ENCODE measurements at regions of chr3 and their contacts with region 1.

Region 1: GRCh38 chr3:112372396-112372795 is 39.4 kb downstream of the CD200 start:
- DNase-seq: no peak
- ATAC-seq: no peak
- H3K4me3 ChIP-seq: no peak overlapping the region
- H3K4me3 Mint-ChIP-seq: no peak overlapping the region
- H3K27ac ChIP-seq: no peak overlapping the region
- H3K27ac Mint-ChIP-seq: no peak overlapping the region
- H3K4me1 ChIP-seq: peaks cover 0 to 5% of the 10 kb centered on the region in 2 donors
- H3K4me1 Mint-ChIP-seq: peaks cover 10 to 40% (median 19%) of the 10 kb centered on the region in 7 donors
- H3K27me3 ChIP-seq: no peaks in the 10 kb centered on the region
- H3K27me3 Mint-ChIP-seq: no peaks in the 10 kb centered on the region

Region 2: DNA sequence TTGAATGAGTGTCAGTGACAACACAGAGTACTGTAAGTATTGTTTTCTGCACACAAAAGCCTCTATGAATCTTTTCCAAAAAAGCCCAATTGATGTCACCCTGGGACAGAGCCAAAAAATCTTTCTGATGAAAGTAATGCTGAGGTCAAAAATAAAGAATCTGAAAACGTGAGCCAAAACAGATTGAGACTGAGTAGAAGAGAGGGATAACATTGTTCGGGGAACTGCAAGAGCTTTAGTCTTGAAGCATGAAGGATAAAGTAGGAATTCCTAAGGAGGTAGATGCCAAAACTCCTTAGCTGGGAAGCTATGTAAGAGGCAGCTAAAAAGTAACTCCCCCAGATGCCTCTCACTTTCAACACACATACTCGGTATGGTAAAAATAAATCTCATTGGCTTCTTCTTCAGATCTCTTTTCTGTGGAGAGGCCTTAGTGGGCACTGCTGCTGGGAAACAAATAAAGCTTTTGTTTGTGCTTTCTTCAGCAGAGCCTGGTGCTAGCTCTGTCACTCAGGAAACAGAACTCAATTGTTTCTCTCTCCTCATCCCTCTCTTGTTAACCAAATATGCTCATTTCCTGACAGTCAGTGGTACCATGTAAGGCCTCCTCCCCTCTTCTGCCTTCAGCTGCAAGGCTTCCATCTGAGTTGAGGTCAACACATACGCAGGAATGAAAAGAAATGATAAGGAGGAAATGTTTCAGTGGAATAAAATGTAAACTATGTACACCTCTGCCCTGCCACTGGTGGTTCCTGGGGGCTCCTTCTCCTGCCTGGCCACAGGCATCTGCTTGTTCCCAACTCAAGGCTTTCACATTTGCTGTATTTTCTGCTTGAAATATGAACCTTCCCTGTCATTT is 18.6 kb after region 1 on chr3:
- CTCF ChIA-PET with region 1: no interaction called
- POLR2A ChIA-PET with region 1: no interaction called
- intact Hi-C with region 1: loop called in 1 of 2 experiments (anchors 2 kb)
- DNase-seq: peak in 5 of 9 donors; percentile 7 to 34 (median 25)
- ATAC-seq: peak; percentile 60
- H3K4me3 ChIP-seq: no peak overlapping the region
- H3K4me3 Mint-ChIP-seq: peak overlapping the region in 6 of 10 donors; percentile 9 to 59 (median 34)
- H3K27ac ChIP-seq: no peak overlapping the region
- H3K27ac Mint-ChIP-seq: peak overlapping the region; percentile 60 to 91 (median 77)
- H3K4me1 ChIP-seq: peaks cover 0 to 9% of the 10 kb centered on the region in 2 donors
- H3K4me1 Mint-ChIP-seq: peaks cover 27 to 50% (median 42%) of the 10 kb centered on the region in 7 donors
- H3K27me3 ChIP-seq: no peaks in the 10 kb centered on the region
- H3K27me3 Mint-ChIP-seq: no peaks in the 10 kb centered on the region

Region 3: GRCh38 chr3:112411425-112411824 is 39.0 kb after region 1 on chr3:
- CTCF ChIA-PET with region 1: no interaction called
- POLR2A ChIA-PET with region 1: no interaction called
- intact Hi-C with region 1: no loop called
- DNase-seq: no peak
- ATAC-seq: no peak
- H3K4me3 ChIP-seq: no peak overlapping the region
- H3K4me3 Mint-ChIP-seq: no peak overlapping the region
- H3K27ac ChIP-seq: no peak overlapping the region
- H3K27ac Mint-ChIP-seq: no peak overlapping the region
- H3K4me1 ChIP-seq: no peaks in the 10 kb centered on the region
- H3K4me1 Mint-ChIP-seq: peaks cover 7 to 33% (median 20%) of the 10 kb centered on the region in 7 donors
- H3K27me3 ChIP-seq: no peaks in the 10 kb centered on the region
- H3K27me3 Mint-ChIP-seq: peaks cover 0 to 2% (median 0%) of the 10 kb centered on the region in 5 donors